ENCODE measurements at regions of chr13 and their contacts with region 1.

Region 1: DNA sequence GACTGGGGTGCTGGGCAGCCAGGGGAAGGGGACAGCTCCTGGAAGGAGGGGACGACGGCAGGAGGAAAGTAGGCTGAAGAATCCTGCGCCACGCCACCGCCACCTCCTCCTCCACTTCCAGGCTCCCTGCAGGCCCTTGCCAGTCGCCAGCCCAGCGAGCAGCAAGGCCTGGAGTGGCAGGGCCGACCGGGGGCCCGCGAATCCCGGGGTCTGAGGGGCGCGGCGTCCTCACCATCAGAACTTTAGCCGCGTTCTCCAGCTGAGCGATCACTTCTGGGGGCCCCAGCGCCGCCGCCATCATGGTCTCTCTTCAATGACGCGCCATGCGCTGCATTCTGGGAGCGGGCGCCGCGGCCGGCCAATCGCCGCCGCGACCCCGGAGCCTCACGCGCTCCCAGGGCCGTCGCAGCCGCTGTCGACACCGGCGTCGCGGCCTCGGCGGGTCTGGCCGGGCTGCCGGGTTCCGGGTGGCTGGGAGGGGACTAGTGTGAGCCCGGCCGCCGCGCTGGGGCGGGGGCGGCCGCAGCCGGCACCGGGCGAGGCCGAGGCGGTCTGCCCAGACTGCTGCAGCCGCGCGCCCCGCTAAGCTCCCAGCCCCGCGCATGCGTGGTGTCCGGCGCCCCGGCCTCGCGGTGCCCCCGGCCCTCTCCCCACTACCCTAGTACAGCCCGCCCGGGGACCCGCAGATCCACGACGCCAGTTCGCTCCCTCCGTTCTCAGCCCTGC is at the start of gene XPO4:
- DNase-seq: peak; percentile 81
- H3K4me3 ChIP-seq: peak within 1 kb of the TSS; percentile 60 to 100 (median 86)
- H3K27ac ChIP-seq: peak within 1 kb of the TSS; percentile 65
- H3K4me1 ChIP-seq: peaks cover 12% of the 10 kb centered on the region
- H3K27me3 ChIP-seq: no peaks in the 10 kb centered on the region
- CTCF ChIP-seq: no peak
- POLR2A ChIP-seq: peak; percentile 83
- total RNA-seq, gene XPO4: 21.3 and 22.5 TPM in 2 replicates

Region 2: GRCh38 chr13:20740021-20740420 is 162.6 kb before region 1 on chr13:
- CTCF ChIA-PET with region 1: no interaction called
- POLR2A ChIA-PET with region 1: no interaction called
- dilution Hi-C with region 1: no loop called
- intact Hi-C with region 1: no loop called
- DNase-seq: no peak
- H3K4me3 ChIP-seq: no peak overlapping the region
- H3K27ac ChIP-seq: no peak overlapping the region
- H3K4me1 ChIP-seq: no peaks in the 10 kb centered on the region
- H3K27me3 ChIP-seq: no peaks in the 10 kb centered on the region
- CTCF ChIP-seq: no peak
- POLR2A ChIP-seq: no peak

Region 3: GRCh38 chr13:20882206-20882605 is 20.4 kb before region 1 on chr13:
- CTCF ChIA-PET with region 1: interaction called, 4 read pairs
- POLR2A ChIA-PET with region 1: no interaction called
- dilution Hi-C with region 1: no loop called
- intact Hi-C with region 1: loop called (anchors 2 kb)
- DNase-seq: no peak
- H3K4me3 ChIP-seq: no peak overlapping the region
- H3K27ac ChIP-seq: no peak overlapping the region
- H3K4me1 ChIP-seq: peaks cover 15% of the 10 kb centered on the region
- H3K27me3 ChIP-seq: no peaks in the 10 kb centered on the region
- CTCF ChIP-seq: no peak
- POLR2A ChIP-seq: no peak